Ascending aorta (tissue), 2 donors: ENCODE measurements at regions of chr19 and their contacts with region 1.

Region 1: DNA sequence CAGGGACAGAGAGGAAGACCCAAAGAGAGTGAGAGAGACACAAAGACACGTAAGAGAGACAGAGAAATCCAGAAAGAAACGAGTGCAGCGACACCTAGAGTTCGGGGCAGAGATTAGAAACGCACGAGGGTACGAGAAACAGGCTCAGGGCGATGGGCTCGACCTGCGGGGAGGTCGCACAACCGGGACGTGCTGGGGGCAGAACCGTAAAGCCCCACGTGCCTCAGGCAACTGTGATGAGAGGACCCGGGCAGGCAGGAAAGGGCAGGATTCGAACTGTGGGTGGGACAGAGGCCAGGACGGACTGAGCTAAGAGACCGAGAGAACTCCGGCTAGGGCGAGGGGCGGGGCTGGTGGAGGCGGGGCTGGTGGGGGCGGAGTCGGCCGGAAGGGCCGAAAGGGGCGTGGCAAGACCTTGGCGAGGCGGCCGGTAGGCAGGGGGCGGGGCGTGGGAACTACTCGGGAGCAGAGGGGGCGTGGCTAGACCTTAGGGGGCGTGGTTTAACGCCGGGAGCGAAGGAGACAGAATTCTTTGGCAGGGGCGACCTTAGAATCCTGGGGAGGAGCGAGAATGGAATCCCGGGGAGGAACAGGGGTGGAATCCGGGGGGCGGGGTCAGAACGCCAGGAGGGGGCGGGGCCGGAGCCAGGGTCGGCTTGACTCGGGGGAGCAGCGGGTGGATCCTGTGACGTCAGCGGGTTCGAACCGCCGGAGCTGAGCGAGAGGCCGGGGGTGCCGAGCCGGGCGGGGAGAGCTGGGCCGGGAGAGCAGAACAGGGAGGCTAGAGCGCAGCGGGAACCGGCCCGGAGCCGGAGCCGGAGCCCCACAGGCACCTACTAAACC is at the start of gene NECTIN2:
- DNase-seq: peak; percentile 97 to 100
- H3K4me3 ChIP-seq: peak within 1 kb of the TSS; percentile 97 to 99
- H3K27ac ChIP-seq: peak within 1 kb of the TSS; percentile 96 to 98
- H3K4me1 ChIP-seq: peaks cover 8 to 26% of the 10 kb centered on the region in 2 donors
- H3K27me3 ChIP-seq: no peaks in the 10 kb centered on the region
- CTCF ChIP-seq: peak; percentile 73 to 82 (median 80)
- total RNA-seq, gene NECTIN2: 125 TPM

Region 2: DNA sequence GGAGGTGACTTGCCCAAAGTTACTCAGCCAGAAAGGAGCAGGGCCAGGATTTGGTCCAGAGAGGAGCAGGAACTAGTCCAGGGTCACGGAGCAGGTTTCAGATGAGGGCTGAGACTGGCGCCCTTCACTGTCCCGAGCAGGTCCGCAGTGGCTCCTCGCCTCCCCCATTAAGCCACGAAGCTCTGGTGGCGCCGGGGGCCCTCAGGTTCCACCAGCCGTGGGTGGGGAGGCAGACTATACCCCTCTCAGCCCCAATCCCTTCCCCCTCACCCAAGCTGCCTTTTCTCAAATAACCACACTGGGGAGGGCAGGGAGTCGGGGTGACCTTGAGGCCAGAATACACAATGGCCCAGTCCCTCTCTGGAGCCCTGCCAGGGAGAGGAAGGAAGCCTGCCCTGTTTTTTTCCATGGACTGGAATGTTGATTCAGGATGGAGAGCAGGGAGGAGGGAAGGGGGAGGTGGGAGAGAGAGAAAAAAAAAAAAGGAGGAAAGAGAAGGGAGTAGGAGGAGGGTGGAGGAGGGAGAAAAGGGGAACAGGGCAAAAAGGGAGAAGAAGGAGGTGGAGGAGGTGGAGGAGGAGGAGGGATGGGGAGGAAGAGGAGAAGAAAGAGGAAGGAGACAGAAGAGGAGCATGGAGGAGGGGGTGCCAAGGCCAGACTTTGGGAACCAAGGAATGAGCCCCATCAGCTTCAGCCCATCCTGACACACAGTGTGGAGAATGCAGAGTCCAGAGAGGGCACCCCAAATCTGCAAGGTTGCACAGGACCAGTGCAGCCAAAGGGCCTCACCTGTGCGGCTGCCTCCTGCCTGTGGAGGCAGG is 127.2 kb before region 1 on chr19:
- intact Hi-C with region 1: loop called (anchors 5 kb)
- DNase-seq: peak in 1 of 2 donors; percentile 84
- H3K4me3 ChIP-seq: peak overlapping the region; percentile 7 to 47
- H3K27ac ChIP-seq: peak overlapping the region; percentile 67 to 85
- H3K4me1 ChIP-seq: peaks cover 5 to 22% of the 10 kb centered on the region in 2 donors
- H3K27me3 ChIP-seq: no peaks in the 10 kb centered on the region
- CTCF ChIP-seq: no peak

Region 3: DNA sequence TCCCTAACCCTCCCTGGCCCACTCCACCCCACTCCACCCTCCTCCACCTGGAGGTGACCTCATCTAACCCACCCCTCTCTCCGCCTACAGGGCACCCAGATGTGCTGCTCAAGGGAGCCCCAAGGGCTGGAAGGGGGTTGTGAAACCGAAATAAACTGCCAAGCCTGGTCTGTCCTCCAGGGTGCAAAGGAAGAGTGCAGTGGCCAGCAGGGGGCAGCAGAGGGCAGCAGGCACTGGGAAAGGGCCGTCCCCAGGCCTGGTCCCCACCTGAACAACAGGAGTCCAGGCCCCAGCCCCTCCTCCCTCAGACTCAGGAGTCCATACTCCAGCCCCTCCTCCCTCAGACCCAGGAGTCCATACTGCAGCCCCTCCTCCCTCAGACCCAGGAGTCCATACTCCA is 45.4 kb before region 1 on chr19:
- intact Hi-C with region 1: loop called (anchors 1 kb)
- DNase-seq: peak; percentile 41 to 91
- H3K4me3 ChIP-seq: no peak overlapping the region
- H3K27ac ChIP-seq: no peak overlapping the region
- H3K4me1 ChIP-seq: peaks cover 4 to 9% of the 10 kb centered on the region in 2 donors
- H3K27me3 ChIP-seq: no peaks in the 10 kb centered on the region
- CTCF ChIP-seq: peak; percentile 90 to 96 (median 94)

Region 4: GRCh38 chr19:44820648-44821609 is 24.9 kb before region 1 on chr19:
- intact Hi-C with region 1: loop called (anchors 1 kb)
- DNase-seq: peak; percentile 75 to 93
- H3K4me3 ChIP-seq: peak overlapping the region in 1 of 2 donors; percentile 44
- H3K27ac ChIP-seq: peak overlapping the region; percentile 82 to 87
- H3K4me1 ChIP-seq: peaks cover 0 to 18% of the 10 kb centered on the region in 2 donors
- H3K27me3 ChIP-seq: no peaks in the 10 kb centered on the region
- CTCF ChIP-seq: no peak

Region 5: GRCh38 chr19:45178262-45179071 is 332.6 kb after region 1 on chr19 and contains the start of gene BLOC1S3:
- intact Hi-C with region 1: loop called (anchors 5 kb)
- DNase-seq: peak; percentile 100
- H3K4me3 ChIP-seq: peak within 1 kb of the TSS; percentile 84 to 91
- H3K27ac ChIP-seq: peak within 1 kb of the TSS; percentile 96 to 99
- H3K4me1 ChIP-seq: peaks cover 3 to 24% of the 10 kb centered on the region in 2 donors
- H3K27me3 ChIP-seq: no peaks in the 10 kb centered on the region
- CTCF ChIP-seq: peak in 2 of 3 experiments; percentile 11 to 34
- total RNA-seq, gene BLOC1S3: 0.32 TPM